Activated CD4-positive, alpha-beta T cell treated with anti-CD3 and anti-CD28 coated beads, Interleukin-2, amount 10 ng/mL, durations not matched to agents 24 days and 14 days (primary cell): ENCODE measurements at regions of chr17 and their contacts with region 1.

Region 1: GRCh38 chr17:17959520-17960361 is 12.5 kb downstream of the TOM1L2 start:
- DNase-seq: peak; percentile 78
- H3K4me3 Mint-ChIP-seq: peak overlapping the region; percentile 84
- H3K27ac Mint-ChIP-seq: peak overlapping the region; percentile 99
- H3K4me1 Mint-ChIP-seq: peaks cover 52% of the 10 kb centered on the region
- H3K27me3 Mint-ChIP-seq: no peaks in the 10 kb centered on the region

Region 2: GRCh38 chr17:17836250-17836817 is 123.4 kb before region 1 on chr17:
- intact Hi-C with region 1: no loop called
- DNase-seq: peak; percentile 99
- H3K4me3 Mint-ChIP-seq: peak overlapping the region; percentile 98
- H3K27ac Mint-ChIP-seq: peak overlapping the region; percentile 95
- H3K4me1 Mint-ChIP-seq: peaks cover 68% of the 10 kb centered on the region
- H3K27me3 Mint-ChIP-seq: no peaks in the 10 kb centered on the region

Region 3: GRCh38 chr17:17849845-17850373 is 109.8 kb before region 1 on chr17:
- intact Hi-C with region 1: loop called (anchors 5 kb)
- DNase-seq: peak; percentile 93
- H3K4me3 Mint-ChIP-seq: peak overlapping the region; percentile 64
- H3K27ac Mint-ChIP-seq: peak overlapping the region; percentile 97
- H3K4me1 Mint-ChIP-seq: peaks cover 66% of the 10 kb centered on the region
- H3K27me3 Mint-ChIP-seq: no peaks in the 10 kb centered on the region

Region 4: GRCh38 chr17:17919169-17920107 is 40.3 kb before region 1 on chr17:
- intact Hi-C with region 1: loop called (anchors 1 kb)
- DNase-seq: peak; percentile 88
- H3K4me3 Mint-ChIP-seq: no peak overlapping the region
- H3K27ac Mint-ChIP-seq: no peak overlapping the region
- H3K4me1 Mint-ChIP-seq: peaks cover 14% of the 10 kb centered on the region
- H3K27me3 Mint-ChIP-seq: no peaks in the 10 kb centered on the region

Region 5: GRCh38 chr17:17972126-17972951 is 12.6 kb after region 1 on chr17 and contains the starts of genes DRC3 and TOM1L2:
- intact Hi-C with region 1: loop called (anchors 1 kb)
- DNase-seq: peak; percentile 100
- H3K4me3 Mint-ChIP-seq: peak within 1 kb of the TSS; percentile 94
- H3K27ac Mint-ChIP-seq: peak within 1 kb of the TSS; percentile 92
- H3K4me1 Mint-ChIP-seq: peaks cover 22% of the 10 kb centered on the region
- H3K27me3 Mint-ChIP-seq: no peaks in the 10 kb centered on the region
- total RNA-seq, gene DRC3: 0.42 TPM in 1 of 2 replicates, not detected in the other
- total RNA-seq, gene TOM1L2: 8.8 and 10.0 TPM in 2 replicates